Sigmoid colon (tissue), 7 donors: ENCODE measurements at regions of chr15 and their contacts with region 1.

Region 1: DNA sequence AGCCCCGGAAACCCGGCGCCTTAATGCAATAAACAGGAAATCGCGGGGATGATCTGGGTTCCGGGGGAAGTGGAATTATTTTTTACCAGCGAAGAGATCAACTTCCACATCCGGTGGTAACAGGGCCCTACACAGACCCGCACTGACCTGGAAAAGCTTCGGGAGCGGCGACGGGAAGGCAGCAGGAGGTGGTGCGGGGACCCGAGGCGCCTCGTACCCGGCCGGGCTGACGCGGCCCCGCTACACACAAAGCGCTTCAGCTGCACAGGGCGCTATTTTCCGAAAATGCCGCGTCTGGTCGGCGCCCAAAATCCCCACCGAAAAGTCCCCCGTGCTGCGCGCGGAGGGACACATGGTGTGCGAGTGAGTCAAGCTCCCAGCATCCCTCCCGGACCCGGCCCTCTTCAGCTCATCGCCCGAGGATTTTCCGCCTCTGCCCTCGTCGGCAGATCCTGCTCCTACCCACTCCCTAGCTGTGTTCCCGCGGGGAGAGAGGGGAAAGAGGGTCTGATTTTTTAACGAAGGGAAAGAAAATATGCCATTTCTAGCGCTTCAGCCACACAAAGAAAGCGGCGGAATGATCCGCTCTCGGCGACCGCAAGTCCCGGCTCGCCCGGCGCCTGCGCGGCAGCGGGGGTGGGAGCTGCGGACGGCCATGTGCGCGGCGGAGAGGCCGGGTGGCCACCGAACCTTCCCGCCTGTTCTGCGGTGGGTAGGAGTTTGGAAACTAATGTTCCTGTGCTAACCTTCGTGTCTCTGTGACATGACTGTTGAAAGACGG is at the start of gene GABPB1:
- DNase-seq: peak; percentile 92
- H3K4me3 ChIP-seq: peak within 1 kb of the TSS; percentile 82 to 95 (median 93)
- H3K27ac ChIP-seq: peak within 1 kb of the TSS; percentile 95 to 100 (median 98)
- H3K4me1 ChIP-seq: peaks cover 0 to 49% (median 45%) of the 10 kb centered on the region in 4 donors
- H3K27me3 ChIP-seq: no peaks in the 10 kb centered on the region
- CTCF ChIP-seq: no peak
- EP300 ChIP-seq: no peak
- POLR2A ChIP-seq: peak; percentile 48 to 53
- total RNA-seq, gene GABPB1: 11.4 to 17.5 (median 14.6) TPM

Region 2: DNA sequence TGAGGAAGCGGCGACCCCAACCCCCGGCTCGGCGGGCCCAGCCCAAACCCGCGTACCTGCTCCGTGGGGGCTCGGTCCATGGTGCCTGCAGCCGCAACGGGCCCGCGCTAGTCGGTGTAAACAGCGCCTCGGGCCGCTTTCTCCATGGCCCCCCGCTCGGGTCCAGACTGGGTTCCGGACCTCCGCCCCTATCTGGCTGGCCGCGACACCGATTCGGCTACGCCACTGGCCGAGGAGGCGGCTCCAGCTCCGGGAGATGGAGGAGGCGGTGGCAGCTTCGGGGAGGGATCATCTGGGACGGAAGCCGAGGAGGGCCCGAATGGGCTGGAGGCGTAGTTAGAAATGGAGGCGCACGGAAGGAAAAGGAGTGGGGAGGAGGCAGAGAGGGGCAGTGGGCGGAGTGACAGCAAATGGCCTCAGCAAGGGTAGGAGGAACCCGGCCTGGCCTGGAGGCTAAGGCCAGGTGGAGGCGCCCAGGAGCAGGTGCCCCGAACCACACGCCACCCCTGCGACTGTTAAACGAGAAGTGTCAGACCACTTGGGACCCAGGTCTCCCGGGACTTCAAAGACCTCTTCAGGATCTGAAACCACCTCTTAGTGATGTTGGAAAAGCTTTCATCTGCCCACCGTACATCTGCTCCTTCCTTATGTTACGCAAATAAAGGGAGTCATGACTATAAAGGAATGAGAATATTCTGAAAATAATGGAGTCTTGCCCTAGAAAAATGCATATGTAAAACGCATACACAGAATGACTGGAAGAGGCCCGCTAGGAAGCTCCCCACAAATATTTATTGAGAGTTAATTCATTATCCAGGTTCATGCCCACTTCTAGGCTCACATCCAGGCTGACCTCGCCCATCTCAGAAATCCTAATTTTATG is 1308.6 kb before region 1 on chr15 and contains the start of gene SECISBP2L:
- intact Hi-C with region 1: loop called (anchors 10 kb)
- DNase-seq: peak; percentile 96
- H3K4me3 ChIP-seq: peak within 1 kb of the TSS; percentile 91 to 99 (median 95)
- H3K27ac ChIP-seq: peak within 1 kb of the TSS; percentile 91 to 95 (median 93)
- H3K4me1 ChIP-seq: peaks cover 0 to 40% (median 36%) of the 10 kb centered on the region in 4 donors
- H3K27me3 ChIP-seq: no peaks in the 10 kb centered on the region
- CTCF ChIP-seq: no peak
- EP300 ChIP-seq: peak in 1 of 4 donors; percentile 35
- POLR2A ChIP-seq: peak; percentile 80 to 89
- total RNA-seq, gene SECISBP2L: 34.1 to 47.6 (median 41.2) TPM

Region 3: GRCh38 chr15:49155110-49155833 is 1199.8 kb before region 1 on chr15 and contains the start of gene COPS2:
- intact Hi-C with region 1: loop called (anchors 10 kb)
- DNase-seq: peak; percentile 97
- H3K4me3 ChIP-seq: peak within 1 kb of the TSS; percentile 73 to 98 (median 88)
- H3K27ac ChIP-seq: peak within 1 kb of the TSS; percentile 86 to 97 (median 92)
- H3K4me1 ChIP-seq: peaks cover 0 to 48% (median 37%) of the 10 kb centered on the region in 4 donors
- H3K27me3 ChIP-seq: no peaks in the 10 kb centered on the region
- CTCF ChIP-seq: no peak
- EP300 ChIP-seq: peak in 2 of 4 donors; percentile 5 to 66
- POLR2A ChIP-seq: peak in 1 of 2 donors; percentile 38
- total RNA-seq, gene COPS2: 88.9 to 142 (median 98.5) TPM

Region 4: GRCh38 chr15:49769225-49769624 is 585.8 kb before region 1 on chr15:
- intact Hi-C with region 1: no loop called
- DNase-seq: no peak
- H3K4me3 ChIP-seq: no peak overlapping the region
- H3K27ac ChIP-seq: peak overlapping the region in 3 of 4 donors; percentile 27 to 52 (median 36)
- H3K4me1 ChIP-seq: peaks cover 0 to 13% (median 3%) of the 10 kb centered on the region in 4 donors
- H3K27me3 ChIP-seq: no peaks in the 10 kb centered on the region
- CTCF ChIP-seq: no peak
- EP300 ChIP-seq: no peak
- POLR2A ChIP-seq: no peak

Region 5: GRCh38 chr15:50424066-50424890 is 69.2 kb after region 1 on chr15 and contains the start of gene USP8:
- intact Hi-C with region 1: loop called (anchors 2 kb)
- DNase-seq: peak; percentile 97
- H3K4me3 ChIP-seq: peak within 1 kb of the TSS; percentile 69 to 76 (median 71)
- H3K27ac ChIP-seq: peak within 1 kb of the TSS; percentile 87 to 90 (median 88)
- H3K4me1 ChIP-seq: peaks cover 0 to 35% (median 23%) of the 10 kb centered on the region in 4 donors
- H3K27me3 ChIP-seq: no peaks in the 10 kb centered on the region
- CTCF ChIP-seq: no peak
- EP300 ChIP-seq: no peak
- POLR2A ChIP-seq: peak; percentile 70 to 89
- total RNA-seq, gene USP8: 49.4 to 59.2 (median 50.1) TPM

Region 6: DNA sequence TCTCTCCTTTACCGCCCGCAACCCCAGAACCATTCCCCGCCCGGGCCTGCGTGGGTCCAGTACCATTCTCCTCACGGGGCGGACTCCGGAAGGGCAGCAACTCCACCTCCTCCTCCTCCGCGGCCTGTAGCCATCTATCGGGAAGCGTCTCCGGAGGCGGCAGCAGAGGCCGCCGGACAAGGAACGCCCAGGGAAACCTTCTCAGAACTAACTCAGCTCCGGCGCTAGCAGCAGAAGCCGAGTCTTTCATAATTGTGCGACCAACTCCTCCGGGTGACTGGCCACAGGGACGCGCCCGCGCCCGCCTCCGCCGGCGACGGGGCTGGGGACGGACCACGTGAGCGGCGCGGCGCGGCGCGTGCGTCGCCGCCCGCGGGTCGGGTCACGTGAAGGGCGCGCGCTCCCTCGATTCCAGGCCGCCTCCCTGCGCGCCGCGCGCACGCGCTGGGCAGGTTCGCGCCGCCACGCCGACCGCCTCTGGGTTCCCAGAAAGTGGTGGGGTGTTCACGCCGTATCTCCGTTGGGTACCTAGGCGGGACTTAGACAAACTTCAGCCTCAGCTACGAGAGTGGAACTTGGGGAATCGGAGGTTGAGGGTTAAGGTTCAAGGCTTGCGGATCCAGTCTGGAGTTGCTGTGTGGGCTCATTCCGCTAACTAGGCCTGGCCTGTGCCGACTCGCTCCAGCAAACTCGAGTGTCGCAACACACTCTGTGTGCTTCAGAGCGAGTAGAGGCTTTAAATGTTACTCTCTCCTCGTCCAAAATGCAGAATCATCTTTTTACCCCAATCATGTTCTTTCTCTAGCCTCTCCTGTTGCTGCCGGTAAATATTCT is 331.7 kb after region 1 on chr15 and contains the start of gene TRPM7:
- intact Hi-C with region 1: loop called (anchors 10 kb)
- DNase-seq: peak; percentile 93
- H3K4me3 ChIP-seq: peak within 1 kb of the TSS; percentile 65 to 90 (median 76)
- H3K27ac ChIP-seq: peak within 1 kb of the TSS; percentile 94 to 97 (median 96)
- H3K4me1 ChIP-seq: peaks cover 0 to 36% (median 31%) of the 10 kb centered on the region in 4 donors
- H3K27me3 ChIP-seq: no peaks in the 10 kb centered on the region
- CTCF ChIP-seq: no peak
- EP300 ChIP-seq: no peak
- POLR2A ChIP-seq: peak; percentile 29 to 51
- total RNA-seq, gene TRPM7: 32.2 to 53.7 (median 42.6) TPM

Region 7: GRCh38 chr15:50765195-50765973 is 410.4 kb after region 1 on chr15 and contains the start of gene SPPL2A:
- intact Hi-C with region 1: loop called (anchors 10 kb)
- DNase-seq: peak; percentile 91
- H3K4me3 ChIP-seq: peak within 1 kb of the TSS; percentile 88 to 94 (median 90)
- H3K27ac ChIP-seq: peak within 1 kb of the TSS; percentile 97 to 99 (median 98)
- H3K4me1 ChIP-seq: peaks cover 0 to 19% (median 15%) of the 10 kb centered on the region in 4 donors
- H3K27me3 ChIP-seq: no peaks in the 10 kb centered on the region
- CTCF ChIP-seq: no peak
- EP300 ChIP-seq: no peak
- POLR2A ChIP-seq: peak; percentile 59 to 76
- total RNA-seq, gene SPPL2A: 98.6 to 303 (median 140) TPM

Region 8: DNA sequence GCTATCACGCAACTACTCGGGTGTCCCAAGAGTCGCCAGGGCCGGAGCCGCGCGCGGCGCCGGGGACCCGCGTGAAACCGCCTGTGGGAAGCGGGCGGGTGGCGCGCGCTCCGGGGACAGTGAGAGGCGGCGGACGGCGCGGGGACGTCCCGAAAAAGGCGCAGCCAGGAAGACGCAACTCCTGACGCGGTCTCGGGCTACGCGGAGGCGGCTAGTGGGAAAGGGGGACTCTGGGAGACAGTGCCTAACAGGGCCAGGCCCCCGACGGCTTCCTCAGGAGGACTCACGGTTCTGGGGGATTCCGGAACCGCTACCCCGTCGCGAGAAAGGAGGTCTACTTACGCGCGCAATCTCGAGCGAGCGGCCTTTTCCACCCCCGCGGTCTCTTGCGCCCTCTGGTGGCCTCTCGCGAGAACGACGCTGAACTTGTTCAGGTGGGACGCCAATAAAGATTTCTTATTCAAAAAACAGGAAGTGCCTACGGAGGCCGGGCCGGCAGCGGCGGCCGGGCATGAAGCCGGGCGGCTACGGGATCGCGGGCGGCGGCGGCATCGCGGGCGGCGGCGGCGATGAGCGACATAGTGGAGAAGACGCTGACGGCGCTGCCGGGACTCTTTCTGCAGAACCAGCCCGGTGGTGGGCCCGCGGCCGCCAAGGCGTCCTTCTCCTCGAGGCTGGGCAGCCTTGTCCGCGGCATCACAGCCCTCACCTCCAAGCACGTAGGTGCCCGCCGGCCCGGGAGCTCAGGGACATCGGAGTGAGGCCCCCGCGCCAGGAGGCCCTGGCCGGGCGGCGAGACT is 553.4 kb after region 1 on chr15 and contains the start of gene AP4E1:
- intact Hi-C with region 1: loop called (anchors 10 kb)
- DNase-seq: peak; percentile 96
- H3K4me3 ChIP-seq: peak within 1 kb of the TSS; percentile 78 to 96 (median 92)
- H3K27ac ChIP-seq: peak within 1 kb of the TSS; percentile 90 to 95 (median 93)
- H3K4me1 ChIP-seq: peaks cover 0 to 33% (median 26%) of the 10 kb centered on the region in 4 donors
- H3K27me3 ChIP-seq: no peaks in the 10 kb centered on the region
- CTCF ChIP-seq: peak; percentile 83 to 96 (median 90)
- EP300 ChIP-seq: no peak
- POLR2A ChIP-seq: peak in 1 of 2 donors; percentile 17
- total RNA-seq, gene AP4E1: 7.3 to 8.3 (median 8.0) TPM